ENCODE measurements at regions of chr5 and their contacts with region 1.

Region 1: GRCh38 chr5:35707659-35708058 is 90.0 kb downstream of the SPEF2 start:
- DNase-seq: peak in 4 of 9 donors; percentile 1 to 20 (median 6)
- ATAC-seq: no peak
- H3K4me3 ChIP-seq: no peak overlapping the region
- H3K4me3 Mint-ChIP-seq: no peak overlapping the region
- H3K27ac ChIP-seq: no peak overlapping the region
- H3K27ac Mint-ChIP-seq: peak overlapping the region in 3 of 9 donors; percentile 24 to 25 (median 25)
- H3K4me1 ChIP-seq: no peaks in the 10 kb centered on the region
- H3K4me1 Mint-ChIP-seq: peaks cover 2 to 25% (median 24%) of the 10 kb centered on the region in 7 donors
- H3K27me3 ChIP-seq: no peaks in the 10 kb centered on the region
- H3K27me3 Mint-ChIP-seq: no peaks in the 10 kb centered on the region

Region 2: DNA sequence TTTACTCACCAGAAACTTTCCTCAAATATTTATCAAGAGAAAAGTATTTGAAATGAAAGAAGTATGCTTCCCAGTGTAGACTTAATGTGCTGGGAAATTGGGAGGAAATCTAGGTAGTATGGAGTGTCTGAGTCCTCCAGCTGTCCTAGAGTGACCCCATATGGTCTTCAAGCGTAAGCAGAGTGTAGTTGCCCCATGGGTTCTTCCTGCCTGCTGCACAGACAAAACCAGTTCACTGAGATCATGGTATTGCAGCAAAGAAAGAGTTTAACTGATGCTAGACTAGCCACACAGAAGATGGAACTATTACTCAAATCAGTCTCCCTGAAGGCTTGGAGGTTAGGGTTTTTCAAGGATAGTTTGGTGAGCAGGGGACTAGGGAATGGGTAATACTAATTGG is 362.4 kb before region 1 on chr5:
- CTCF ChIA-PET with region 1: no interaction called
- POLR2A ChIA-PET with region 1: no interaction called
- intact Hi-C with region 1: no loop called
- DNase-seq: no peak
- ATAC-seq: no peak
- H3K4me3 ChIP-seq: no peak overlapping the region
- H3K4me3 Mint-ChIP-seq: no peak overlapping the region
- H3K27ac ChIP-seq: no peak overlapping the region
- H3K27ac Mint-ChIP-seq: no peak overlapping the region
- H3K4me1 ChIP-seq: no peaks in the 10 kb centered on the region
- H3K4me1 Mint-ChIP-seq: peaks cover 0 to 1% (median 0%) of the 10 kb centered on the region in 7 donors
- H3K27me3 ChIP-seq: no peaks in the 10 kb centered on the region
- H3K27me3 Mint-ChIP-seq: peaks cover 0 to 6% (median 3%) of the 10 kb centered on the region in 5 donors

Region 3: GRCh38 chr5:35762368-35762767 is 54.7 kb after region 1 on chr5:
- CTCF ChIA-PET with region 1: no interaction called
- POLR2A ChIA-PET with region 1: interaction called, 5 read pairs
- intact Hi-C with region 1: loop called in 1 of 2 experiments (anchors 5 kb)
- DNase-seq: no peak
- ATAC-seq: no peak
- H3K4me3 ChIP-seq: no peak overlapping the region
- H3K4me3 Mint-ChIP-seq: no peak overlapping the region
- H3K27ac ChIP-seq: no peak overlapping the region
- H3K27ac Mint-ChIP-seq: peak overlapping the region in 3 of 9 donors; percentile 32 to 87 (median 43)
- H3K4me1 ChIP-seq: peaks cover 0 to 11% of the 10 kb centered on the region in 2 donors
- H3K4me1 Mint-ChIP-seq: peaks cover 0 to 80% (median 38%) of the 10 kb centered on the region in 7 donors
- H3K27me3 ChIP-seq: no peaks in the 10 kb centered on the region
- H3K27me3 Mint-ChIP-seq: peaks cover 0 to 3% (median 0%) of the 10 kb centered on the region in 5 donors